ENCODE measurements at regions of chr7 and their contacts with region 1.

Region 1: DNA sequence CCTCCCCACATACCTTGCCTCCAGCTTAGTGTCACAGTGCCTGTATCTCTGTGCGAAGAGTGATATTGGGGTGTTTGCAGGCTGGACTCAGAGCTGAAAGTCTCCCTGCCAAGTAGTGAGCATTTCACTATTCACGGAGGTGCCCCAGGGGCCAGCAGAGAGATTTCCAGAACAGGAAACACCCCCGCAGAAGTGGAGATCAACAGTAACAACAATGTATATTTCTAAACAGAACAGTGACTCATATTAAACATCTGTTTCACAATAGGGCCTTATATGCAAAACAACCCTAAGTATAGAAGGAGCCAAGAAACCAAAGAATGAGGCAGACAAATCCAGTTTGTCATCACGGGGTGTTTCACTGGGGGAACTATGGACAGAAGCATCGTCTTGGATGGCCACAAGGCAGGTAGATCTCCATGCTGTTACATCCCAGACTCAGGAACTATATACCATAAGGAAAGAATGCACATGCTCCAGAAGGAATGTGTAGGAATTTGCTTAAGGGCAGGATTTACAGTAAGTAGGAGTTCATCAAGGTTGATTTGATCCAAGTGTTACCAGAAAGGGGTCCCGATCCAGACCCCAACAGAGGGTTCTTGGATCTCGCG is 29.3 kb upstream of the CCL24 start:
- DNase-seq: peak; percentile 61 to 71 (median 65)
- ATAC-seq: peak; percentile 77
- H3K4me3 ChIP-seq: peak overlapping the region; percentile 20
- H3K27ac ChIP-seq: peak overlapping the region; percentile 82
- H3K4me1 ChIP-seq: peaks cover 13 to 20% of the 10 kb centered on the region in 2 experiments
- H3K27me3 ChIP-seq: no peaks in the 10 kb centered on the region
- CTCF ChIP-seq: no peak
- EP300 ChIP-seq: peak; percentile 70; the same call in 1 of the 2 replicates
- POLR2A ChIP-seq: peak; percentile 87
- RAD21 ChIP-seq: no peak

Region 2: GRCh38 chr7:75772081-75773077 is 70.6 kb before region 1 on chr7 and contains the start of gene CCL26:
- CTCF ChIA-PET with region 1: no interaction called
- POLR2A ChIA-PET with region 1: no interaction called
- in situ Hi-C with region 1: no loop called
- intact Hi-C with region 1: loop called (anchors 5 kb)
- DNase-seq: peak in 1 of 4 experiments; percentile 85
- ATAC-seq: peak; percentile 84
- H3K4me3 ChIP-seq: no peak within 1 kb of the TSS
- H3K27ac ChIP-seq: peak within 1 kb of the TSS; percentile 68
- H3K4me1 ChIP-seq: peaks cover 13 to 22% of the 10 kb centered on the region in 2 experiments
- H3K27me3 ChIP-seq: no peaks in the 10 kb centered on the region
- CTCF ChIP-seq: no peak
- EP300 ChIP-seq: no peak
- POLR2A ChIP-seq: 0 out of 2 replicates have a peak, but pooled peaks have one; percentile 35
- RAD21 ChIP-seq: no peak
- polyA plus RNA-seq, gene CCL26: 21.8 to 26.8 TPM